CD8-positive, alpha-beta T cell (primary cell): ENCODE measurements at regions of chr20 and their contacts with region 1.

Region 1: GRCh38 chr20:25057234-25058050 is 497 bp downstream of the ACSS1 start:
- DNase-seq: peak; percentile 62 to 94 (median 81)
- ATAC-seq: peak; percentile 33
- H3K4me3 ChIP-seq: peak overlapping the region; percentile 62 to 90
- H3K4me3 Mint-ChIP-seq: peak overlapping the region; percentile 87
- H3K27ac ChIP-seq: peak overlapping the region; percentile 71 to 83
- H3K27ac Mint-ChIP-seq: peak overlapping the region; percentile 95
- H3K4me1 ChIP-seq: peaks cover 52% of the 10 kb centered on the region
- H3K4me1 Mint-ChIP-seq: peaks cover 52% of the 10 kb centered on the region
- H3K27me3 ChIP-seq: no peaks in the 10 kb centered on the region
- H3K27me3 Mint-ChIP-seq: no peaks in the 10 kb centered on the region
- CTCF ChIP-seq: no peak

Region 2: GRCh38 chr20:23361598-23362384 is 1695.7 kb before region 1 on chr20 and contains the start of gene GZF1:
- CTCF ChIA-PET with region 1: no interaction called
- POLR2A ChIA-PET with region 1: no interaction called
- intact Hi-C with region 1: loop called in 1 of 2 experiments (anchors 5 kb)
- DNase-seq: peak; percentile 96 to 99 (median 98)
- ATAC-seq: peak; percentile 74
- H3K4me3 ChIP-seq: peak within 1 kb of the TSS; percentile 86 to 95
- H3K4me3 Mint-ChIP-seq: peak within 1 kb of the TSS; percentile 93
- H3K27ac ChIP-seq: peak within 1 kb of the TSS; percentile 92 to 97
- H3K27ac Mint-ChIP-seq: peak within 1 kb of the TSS; percentile 95
- H3K4me1 ChIP-seq: peaks cover 41% of the 10 kb centered on the region
- H3K4me1 Mint-ChIP-seq: peaks cover 62% of the 10 kb centered on the region
- H3K27me3 ChIP-seq: no peaks in the 10 kb centered on the region
- H3K27me3 Mint-ChIP-seq: no peaks in the 10 kb centered on the region
- CTCF ChIP-seq: peak; percentile 43
- total RNA-seq, gene GZF1: 44.9 to 49.5 TPM

Region 3: DNA sequence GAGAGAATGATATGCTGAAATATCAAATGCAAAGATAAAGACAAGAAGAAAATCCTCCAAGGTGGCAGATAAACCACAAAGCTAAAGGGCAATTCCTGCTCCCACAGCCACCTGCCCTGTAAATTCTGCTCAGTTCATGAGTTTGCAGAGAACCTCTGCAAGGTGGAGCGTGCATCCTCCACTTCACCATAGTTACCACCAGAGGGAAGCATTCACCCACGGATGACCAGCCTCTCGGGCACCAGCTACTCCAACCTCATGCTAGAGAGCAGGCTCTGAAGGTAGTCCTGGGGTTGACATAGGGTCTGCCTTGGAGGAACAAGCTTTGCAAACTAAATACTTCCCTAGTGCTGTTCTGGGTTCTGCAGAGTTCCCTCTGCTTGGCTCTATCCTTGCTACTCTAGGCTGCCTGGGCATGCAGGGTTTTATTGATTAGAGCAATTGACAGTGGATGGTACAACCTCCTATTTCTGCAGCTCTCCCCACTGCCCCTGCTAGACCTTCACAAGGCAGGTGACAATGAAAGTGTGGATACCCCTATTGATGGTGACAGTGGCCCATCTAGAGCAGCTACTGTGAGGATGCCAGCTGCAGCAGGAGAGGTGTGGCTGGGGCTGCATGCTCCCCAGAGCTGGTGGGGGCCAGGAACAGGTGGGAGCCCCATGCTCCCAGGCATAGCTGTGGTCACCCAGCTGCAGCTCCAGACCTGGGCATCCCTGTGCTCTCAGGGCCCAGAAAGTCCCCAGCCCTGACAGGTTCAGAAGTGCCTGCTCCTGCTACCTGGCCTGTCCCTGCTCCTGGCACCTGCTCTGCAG is 1119.9 kb before region 1 on chr20:
- CTCF ChIA-PET with region 1: interaction called, 3 read pairs
- POLR2A ChIA-PET with region 1: no interaction called
- intact Hi-C with region 1: loop called in 1 of 2 experiments (anchors 2 kb)
- DNase-seq: peak; percentile 43 to 82 (median 66)
- ATAC-seq: peak; percentile 96
- H3K4me3 ChIP-seq: no peak overlapping the region
- H3K4me3 Mint-ChIP-seq: no peak overlapping the region
- H3K27ac ChIP-seq: no peak overlapping the region
- H3K27ac Mint-ChIP-seq: no peak overlapping the region
- H3K4me1 ChIP-seq: no peaks in the 10 kb centered on the region
- H3K4me1 Mint-ChIP-seq: no peaks in the 10 kb centered on the region
- H3K27me3 ChIP-seq: no peaks in the 10 kb centered on the region
- H3K27me3 Mint-ChIP-seq: no peaks in the 10 kb centered on the region
- CTCF ChIP-seq: peak; percentile 71

Region 4: GRCh38 chr20:25042531-25043498 is 14.6 kb before region 1 on chr20:
- CTCF ChIA-PET with region 1: interaction called, 5 read pairs
- POLR2A ChIA-PET with region 1: interaction called, 10 read pairs
- intact Hi-C with region 1: loop called (anchors 1 to 2 kb)
- DNase-seq: peak; percentile 14 to 83 (median 52)
- ATAC-seq: peak; percentile 85
- H3K4me3 ChIP-seq: peak overlapping the region in 1 of 2 experiments; percentile 34
- H3K4me3 Mint-ChIP-seq: peak overlapping the region; percentile 69
- H3K27ac ChIP-seq: peak overlapping the region; percentile 72 to 83
- H3K27ac Mint-ChIP-seq: peak overlapping the region; percentile 98
- H3K4me1 ChIP-seq: peaks cover 52% of the 10 kb centered on the region
- H3K4me1 Mint-ChIP-seq: peaks cover 39% of the 10 kb centered on the region
- H3K27me3 ChIP-seq: no peaks in the 10 kb centered on the region
- H3K27me3 Mint-ChIP-seq: no peaks in the 10 kb centered on the region
- CTCF ChIP-seq: no peak

Region 5: GRCh38 chr20:25247956-25248785 is 190.7 kb after region 1 on chr20 and contains the start of gene PYGB:
- CTCF ChIA-PET with region 1: interaction called, 4 read pairs
- POLR2A ChIA-PET with region 1: interaction called, 4 read pairs
- intact Hi-C with region 1: loop called (anchors 2 to 5 kb)
- DNase-seq: peak; percentile 65 to 87 (median 70)
- ATAC-seq: peak; percentile 88
- H3K4me3 ChIP-seq: peak within 1 kb of the TSS; percentile 97 to 99
- H3K4me3 Mint-ChIP-seq: peak within 1 kb of the TSS; percentile 93
- H3K27ac ChIP-seq: peak within 1 kb of the TSS; percentile 53 to 80
- H3K27ac Mint-ChIP-seq: peak within 1 kb of the TSS; percentile 91
- H3K4me1 ChIP-seq: peaks cover 29% of the 10 kb centered on the region
- H3K4me1 Mint-ChIP-seq: peaks cover 54% of the 10 kb centered on the region
- H3K27me3 ChIP-seq: no peaks in the 10 kb centered on the region
- H3K27me3 Mint-ChIP-seq: no peaks in the 10 kb centered on the region
- CTCF ChIP-seq: no peak
- total RNA-seq, gene PYGB: 35.2 to 39.2 TPM

Region 6: GRCh38 chr20:25390538-25391528 is 333.4 kb after region 1 on chr20 and contains the start of gene ABHD12:
- CTCF ChIA-PET with region 1: no interaction called
- POLR2A ChIA-PET with region 1: no interaction called
- intact Hi-C with region 1: loop called (anchors 1 to 5 kb)
- DNase-seq: peak; percentile 88 to 96 (median 92)
- ATAC-seq: peak; percentile 91
- H3K4me3 ChIP-seq: peak within 1 kb of the TSS; percentile 55 to 70
- H3K4me3 Mint-ChIP-seq: peak within 1 kb of the TSS; percentile 85
- H3K27ac ChIP-seq: peak within 1 kb of the TSS; percentile 47 to 51
- H3K27ac Mint-ChIP-seq: peak within 1 kb of the TSS; percentile 84
- H3K4me1 ChIP-seq: peaks cover 5% of the 10 kb centered on the region
- H3K4me1 Mint-ChIP-seq: peaks cover 20% of the 10 kb centered on the region
- H3K27me3 ChIP-seq: no peaks in the 10 kb centered on the region
- H3K27me3 Mint-ChIP-seq: no peaks in the 10 kb centered on the region
- CTCF ChIP-seq: no peak
- total RNA-seq, gene ABHD12: 14.1 to 17.9 TPM